ENCODE measurements at regions of chr2 and their contacts with region 1.

Region 1: DNA sequence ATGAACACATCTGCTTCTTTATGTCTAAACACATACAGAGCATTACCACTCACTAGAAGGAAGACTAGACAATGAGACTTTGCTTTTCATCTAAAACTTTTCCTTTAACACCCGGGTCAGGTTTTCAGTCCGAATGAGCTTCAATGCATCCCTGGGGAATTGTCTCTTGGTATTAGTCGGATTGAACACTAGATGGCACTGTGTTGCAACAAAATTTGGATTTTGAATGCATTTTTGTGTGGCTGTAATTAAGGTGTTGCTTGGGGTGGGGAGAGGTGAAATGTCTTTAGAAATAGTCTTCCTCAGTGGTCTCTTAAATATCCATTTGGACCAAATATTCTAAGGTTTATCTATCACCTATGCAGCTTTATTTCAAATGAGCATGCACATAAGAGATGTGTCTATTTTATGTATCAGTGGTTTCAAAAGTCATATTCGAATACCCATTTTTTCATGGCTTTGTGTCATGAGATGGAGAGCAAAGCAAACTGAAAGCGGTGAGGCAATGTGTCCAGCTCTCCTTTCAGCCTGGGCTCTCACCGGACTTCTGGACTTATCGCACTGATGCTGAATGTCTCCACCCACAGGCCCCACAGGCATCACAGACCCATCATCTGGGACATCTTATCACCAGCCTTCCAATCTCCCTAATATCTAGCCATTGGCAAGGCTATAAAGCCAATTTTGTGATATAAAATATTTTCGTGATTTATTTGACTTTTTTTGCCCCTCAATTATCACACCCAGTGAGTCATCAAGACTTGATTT is 510.3 kb downstream of the RNF144A start:
- DNase-seq: peak; percentile 59
- ATAC-seq: no peak
- H3K4me3 Mint-ChIP-seq: no peak overlapping the region
- H3K27ac Mint-ChIP-seq: peak overlapping the region; percentile 68
- H3K4me1 Mint-ChIP-seq: peaks cover 46% of the 10 kb centered on the region
- H3K27me3 Mint-ChIP-seq: no peaks in the 10 kb centered on the region

Region 2: GRCh38 chr2:7450188-7450832 is 22.8 kb after region 1 on chr2:
- CTCF ChIA-PET with region 1: interaction called, 17 read pairs
- POLR2A ChIA-PET with region 1: interaction called, 36 read pairs
- DNase-seq: peak; percentile 67
- ATAC-seq: peak; percentile 58
- H3K4me3 Mint-ChIP-seq: peak overlapping the region; percentile 43
- H3K27ac Mint-ChIP-seq: peak overlapping the region; percentile 97
- H3K4me1 Mint-ChIP-seq: peaks cover 88% of the 10 kb centered on the region
- H3K27me3 Mint-ChIP-seq: no peaks in the 10 kb centered on the region

Region 3: DNA sequence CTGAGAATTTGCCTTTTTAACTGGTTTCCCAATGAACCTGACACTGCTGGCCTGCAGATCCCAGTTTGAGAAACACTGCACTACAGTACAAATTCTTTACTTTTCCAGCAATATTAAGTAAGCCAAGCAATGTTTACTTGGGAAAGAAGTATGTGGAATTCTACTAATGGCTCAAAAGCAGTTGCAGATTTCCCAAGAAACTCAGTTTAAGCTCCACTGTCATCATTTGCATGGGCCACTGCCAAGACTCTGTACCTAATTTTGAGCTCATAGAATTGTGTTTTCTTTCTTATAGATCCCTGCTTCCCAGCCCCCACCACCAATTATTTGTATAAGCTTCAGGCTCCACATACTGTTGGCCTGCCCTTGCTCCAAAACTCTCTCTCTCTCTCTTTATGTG is 165.9 kb after region 1 on chr2:
- CTCF ChIA-PET with region 1: interaction called, 41 read pairs
- POLR2A ChIA-PET with region 1: no interaction called
- DNase-seq: no peak
- ATAC-seq: no peak
- H3K4me3 Mint-ChIP-seq: no peak overlapping the region
- H3K27ac Mint-ChIP-seq: no peak overlapping the region
- H3K4me1 Mint-ChIP-seq: peaks cover 17% of the 10 kb centered on the region
- H3K27me3 Mint-ChIP-seq: no peaks in the 10 kb centered on the region

Region 4: DNA sequence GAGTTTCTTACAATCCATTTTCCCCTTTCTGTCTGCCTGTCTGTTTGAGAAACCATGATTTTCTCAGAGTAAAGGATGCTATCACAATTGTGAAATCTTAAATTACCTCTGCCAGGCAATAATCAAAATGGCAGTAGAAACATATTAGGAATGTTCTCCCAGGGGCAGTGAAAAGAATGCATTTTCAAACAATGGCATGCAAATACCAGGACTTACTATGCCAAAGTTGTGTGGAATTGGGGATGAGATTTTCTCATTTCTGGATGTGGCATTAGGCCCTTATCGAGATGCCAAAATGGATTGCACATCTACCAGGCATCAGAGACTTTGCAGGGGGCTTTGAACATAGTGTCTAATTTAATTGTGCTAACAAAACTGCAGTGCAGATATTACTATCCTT is 311.1 kb after region 1 on chr2:
- CTCF ChIA-PET with region 1: interaction called, 14 read pairs
- POLR2A ChIA-PET with region 1: interaction called, 4 read pairs
- DNase-seq: no peak
- ATAC-seq: no peak
- H3K4me3 Mint-ChIP-seq: no peak overlapping the region
- H3K27ac Mint-ChIP-seq: no peak overlapping the region
- H3K4me1 Mint-ChIP-seq: peaks cover 47% of the 10 kb centered on the region
- H3K27me3 Mint-ChIP-seq: no peaks in the 10 kb centered on the region